Breast epithelium (tissue), 4 donors: ENCODE measurements at regions of chr6 and their contacts with region 1.

Region 1: DNA sequence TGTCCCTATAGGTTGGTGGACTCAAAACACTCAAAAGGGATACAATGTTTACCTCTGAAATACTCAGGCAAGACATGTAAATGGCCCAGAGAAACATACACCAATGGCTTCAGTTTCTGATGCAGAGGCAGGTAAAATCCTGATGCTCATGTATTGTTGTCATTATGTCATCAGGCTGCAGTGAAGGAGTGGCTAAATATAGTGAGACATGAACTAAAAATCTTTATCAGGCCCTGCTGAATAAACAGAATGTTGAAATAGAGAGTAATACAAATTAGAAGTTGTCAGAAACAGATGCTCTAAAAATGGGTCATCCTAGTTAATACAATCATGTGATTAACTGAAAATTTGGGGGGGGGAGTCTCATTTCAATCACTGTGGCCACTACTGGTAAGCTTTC is 20.4 kb downstream of the PTPRK start:
- DNase-seq: no peak
- H3K4me3 ChIP-seq: no peak overlapping the region
- H3K27ac ChIP-seq: peak overlapping the region in 1 of 2 donors; percentile 54
- H3K4me1 ChIP-seq: peaks cover 0 to 18% of the 10 kb centered on the region in 2 donors
- H3K27me3 ChIP-seq: no peaks in the 10 kb centered on the region
- CTCF ChIP-seq: no peak
- POLR2A ChIP-seq: no peak

Region 2: GRCh38 chr6:126600258-126600916 is 1899.6 kb before region 1 on chr6:
- intact Hi-C with region 1: no loop called
- DNase-seq: no peak
- H3K4me3 ChIP-seq: no peak overlapping the region
- H3K27ac ChIP-seq: no peak overlapping the region
- H3K4me1 ChIP-seq: no peaks in the 10 kb centered on the region
- H3K27me3 ChIP-seq: no peaks in the 10 kb centered on the region
- CTCF ChIP-seq: no peak
- POLR2A ChIP-seq: no peak

Region 3: DNA sequence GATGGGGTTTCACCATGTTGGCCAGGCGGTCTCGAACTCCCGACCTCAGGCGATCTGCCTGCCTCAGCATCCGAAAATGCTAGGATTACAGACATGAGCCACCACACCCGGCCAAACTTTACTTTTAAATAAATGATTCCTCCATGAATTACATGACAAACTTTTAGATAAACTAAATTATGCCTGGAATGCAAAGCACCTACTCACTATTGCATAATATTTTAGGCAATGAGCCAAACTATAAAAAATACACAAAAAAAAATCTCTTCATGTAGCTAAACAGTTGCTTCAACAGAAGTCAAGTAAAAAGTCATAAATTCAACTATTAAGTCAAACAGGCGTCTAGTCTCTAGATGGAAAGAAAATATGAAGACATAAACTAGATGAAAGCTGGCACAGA is 36.1 kb before region 1 on chr6:
- intact Hi-C with region 1: loop called (anchors 2 kb)
- DNase-seq: no peak
- H3K4me3 ChIP-seq: no peak overlapping the region
- H3K27ac ChIP-seq: no peak overlapping the region
- H3K4me1 ChIP-seq: no peaks in the 10 kb centered on the region
- H3K27me3 ChIP-seq: no peaks in the 10 kb centered on the region
- CTCF ChIP-seq: no peak
- POLR2A ChIP-seq: no peak

Region 4: GRCh38 chr6:128532827-128533226 is 32.8 kb after region 1 on chr6:
- intact Hi-C with region 1: no loop called
- DNase-seq: no peak
- H3K4me3 ChIP-seq: no peak overlapping the region
- H3K27ac ChIP-seq: no peak overlapping the region
- H3K4me1 ChIP-seq: no peaks in the 10 kb centered on the region
- H3K27me3 ChIP-seq: no peaks in the 10 kb centered on the region
- CTCF ChIP-seq: no peak
- POLR2A ChIP-seq: no peak